Natural killer cell (primary cell): ENCODE measurements at regions of chr1 and their contacts with region 1.

Region 1: GRCh38 chr1:10694633-10695627 is 101.5 kb downstream of the CASZ1 start:
- DNase-seq: peak; percentile 80 to 90
- ATAC-seq: peak; percentile 60 to 85 (median 68)
- H3K4me3 ChIP-seq: peak overlapping the region; percentile 15
- H3K4me3 Mint-ChIP-seq: peak overlapping the region; percentile 86
- H3K27ac ChIP-seq: peak overlapping the region; percentile 45
- H3K27ac Mint-ChIP-seq: peak overlapping the region; percentile 82 to 92
- H3K4me1 ChIP-seq: peaks cover 26% of the 10 kb centered on the region
- H3K4me1 Mint-ChIP-seq: peaks cover 16 to 39% of the 10 kb centered on the region in 2 donors
- H3K27me3 ChIP-seq: no peaks in the 10 kb centered on the region
- H3K27me3 Mint-ChIP-seq: no peaks in the 10 kb centered on the region
- CTCF ChIP-seq: no peak

Region 2: DNA sequence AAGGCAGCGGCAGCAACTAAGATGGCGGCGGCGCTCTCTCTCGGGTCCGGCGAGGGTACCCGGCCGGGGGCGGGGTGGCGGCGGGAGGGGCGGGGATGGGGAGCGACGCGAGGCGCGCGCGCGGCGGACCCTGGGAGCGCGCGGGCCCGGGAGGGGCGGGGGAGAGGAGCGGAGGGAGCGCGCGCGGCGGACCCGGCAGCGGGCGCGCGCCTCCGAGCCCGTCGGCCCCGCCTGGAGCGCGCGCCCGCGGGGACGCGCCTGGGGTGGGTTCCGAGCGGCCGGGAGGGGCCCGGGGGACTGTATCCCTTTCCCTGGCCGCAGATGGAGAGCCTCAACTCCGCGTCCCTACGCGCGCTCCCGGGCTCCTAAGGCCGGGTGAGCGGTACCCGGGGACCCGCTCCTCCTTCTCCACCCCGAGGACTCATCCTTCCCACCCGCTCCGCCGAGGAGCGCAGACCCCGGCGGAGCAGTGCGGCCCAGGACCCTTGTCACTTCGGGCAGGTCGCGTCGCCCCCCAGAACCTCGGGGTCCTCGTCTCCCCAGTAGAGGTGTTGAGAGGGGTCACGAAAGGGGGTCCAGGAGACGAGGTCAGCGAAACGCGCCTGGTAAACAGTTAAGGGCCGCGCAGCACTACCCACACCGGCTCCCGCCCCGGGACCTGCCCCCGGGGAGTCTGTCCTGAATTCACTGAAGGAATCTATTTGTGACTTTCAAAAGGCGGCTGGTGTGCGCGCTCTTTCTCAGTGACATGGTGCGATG is 870.8 kb before region 1 on chr1 and contains the start of gene CLSTN1:
- intact Hi-C with region 1: loop called (anchors 5 kb)
- DNase-seq: peak; percentile 76 to 92
- ATAC-seq: peak; percentile 77 to 89 (median 85)
- H3K4me3 ChIP-seq: peak within 1 kb of the TSS; percentile 70
- H3K4me3 Mint-ChIP-seq: peak within 1 kb of the TSS; percentile 93
- H3K27ac ChIP-seq: peak within 1 kb of the TSS; percentile 77
- H3K27ac Mint-ChIP-seq: peak within 1 kb of the TSS; percentile 78 to 83
- H3K4me1 ChIP-seq: peaks cover 28% of the 10 kb centered on the region
- H3K4me1 Mint-ChIP-seq: peaks cover 35 to 40% of the 10 kb centered on the region in 2 donors
- H3K27me3 ChIP-seq: no peaks in the 10 kb centered on the region
- H3K27me3 Mint-ChIP-seq: no peaks in the 10 kb centered on the region
- CTCF ChIP-seq: no peak
- total RNA-seq, gene CLSTN1: 83.1 to 114 (median 94.5) TPM

Region 3: GRCh38 chr1:10646347-10646861 is 48.5 kb before region 1 on chr1:
- intact Hi-C with region 1: no loop called
- DNase-seq: no peak
- ATAC-seq: no peak
- H3K4me3 ChIP-seq: no peak overlapping the region
- H3K4me3 Mint-ChIP-seq: no peak overlapping the region
- H3K27ac ChIP-seq: no peak overlapping the region
- H3K27ac Mint-ChIP-seq: no peak overlapping the region
- H3K4me1 ChIP-seq: no peaks in the 10 kb centered on the region
- H3K4me1 Mint-ChIP-seq: no peaks in the 10 kb centered on the region
- H3K27me3 ChIP-seq: no peaks in the 10 kb centered on the region
- H3K27me3 Mint-ChIP-seq: no peaks in the 10 kb centered on the region
- CTCF ChIP-seq: no peak

Region 4: GRCh38 chr1:10867138-10867721 is 172.3 kb after region 1 on chr1:
- intact Hi-C with region 1: loop called (anchors 5 kb)
- DNase-seq: peak; percentile 75 to 77
- ATAC-seq: peak; percentile 79 to 95 (median 92)
- H3K4me3 ChIP-seq: no peak overlapping the region
- H3K4me3 Mint-ChIP-seq: peak overlapping the region; percentile 61
- H3K27ac ChIP-seq: no peak overlapping the region
- H3K27ac Mint-ChIP-seq: no peak overlapping the region
- H3K4me1 ChIP-seq: peaks cover 13% of the 10 kb centered on the region
- H3K4me1 Mint-ChIP-seq: peaks cover 5 to 16% of the 10 kb centered on the region in 2 donors
- H3K27me3 ChIP-seq: peaks cover 32% of the 10 kb centered on the region
- H3K27me3 Mint-ChIP-seq: peaks cover 48 to 56% of the 10 kb centered on the region in 2 donors
- CTCF ChIP-seq: peak; percentile 86